ENCODE measurements at regions of chr10 and their contacts with region 1.

Region 1: DNA sequence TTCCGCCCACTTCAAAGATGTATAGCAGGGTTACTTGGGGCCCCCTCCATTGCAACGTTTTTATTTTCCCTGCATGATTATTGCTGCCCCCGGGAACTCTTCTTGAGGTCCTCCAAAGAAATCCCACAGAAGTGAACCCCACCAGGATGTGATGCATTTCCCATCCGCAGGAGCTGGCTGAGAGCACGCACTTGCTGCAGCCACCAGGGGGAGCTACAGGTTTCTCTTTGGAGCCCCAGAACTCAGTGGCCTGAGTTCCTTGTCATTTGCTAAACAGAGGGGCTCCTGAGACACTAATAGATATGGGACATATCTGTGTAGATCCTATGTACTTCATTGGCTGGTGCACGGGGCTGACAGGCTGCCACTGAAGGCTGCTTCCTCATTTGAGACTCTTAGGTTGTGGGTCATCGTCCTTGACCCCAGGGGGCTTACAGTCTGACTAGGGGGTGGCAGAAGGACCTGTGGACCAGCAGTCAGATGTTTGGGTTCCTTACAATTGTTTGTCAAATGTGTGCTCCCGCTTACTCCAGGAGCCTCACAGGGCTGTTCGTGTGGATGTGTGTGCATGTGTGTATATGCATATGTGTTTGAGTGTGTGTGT is 52.3 kb upstream of the ENO4 start:
- DNase-seq: peak; percentile 72
- H3K4me3 ChIP-seq: no peak overlapping the region
- H3K27ac ChIP-seq: no peak overlapping the region
- H3K4me1 ChIP-seq: no peaks in the 10 kb centered on the region
- CTCF ChIP-seq: peak; percentile 91

Region 2: GRCh38 chr10:117174439-117175214 is 377.6 kb after region 1 on chr10:
- CTCF ChIA-PET with region 1: interaction called, 3 read pairs
- POLR2A ChIA-PET with region 1: interaction called, 3 read pairs
- intact Hi-C with region 1: loop called (anchors 1 kb)
- DNase-seq: peak; percentile 83
- H3K4me3 ChIP-seq: peak overlapping the region; percentile 18
- H3K27ac ChIP-seq: no peak overlapping the region
- H3K4me1 ChIP-seq: peaks cover 9% of the 10 kb centered on the region
- CTCF ChIP-seq: peak; percentile 89

Measured in OCI-LY7 (cell line).